Endothelial cell of umbilical vein (primary cell): ENCODE measurements at regions of chr4 and their contacts with region 1.

Region 1: GRCh38 chr4:53576676-53577372 is 14.5 kb downstream of the LNX1 start:
- DNase-seq: peak; percentile 90
- H3K4me3 ChIP-seq: no peak overlapping the region
- H3K27ac ChIP-seq: peak overlapping the region; percentile 40
- H3K4me1 ChIP-seq: peaks cover 36% of the 10 kb centered on the region
- H3K27me3 ChIP-seq: no peaks in the 10 kb centered on the region
- CTCF ChIP-seq: no peak
- POLR2A ChIP-seq: peak; percentile 35

Region 2: GRCh38 chr4:53541577-53542206 is 35.1 kb before region 1 on chr4:
- CTCF ChIA-PET with region 1: interaction called, 5 read pairs
- POLR2A ChIA-PET with region 1: no interaction called
- dilution Hi-C with region 1: no loop called
- intact Hi-C with region 1: loop called (anchors 2 kb)
- DNase-seq: peak; percentile 84
- H3K4me3 ChIP-seq: no peak overlapping the region
- H3K27ac ChIP-seq: peak overlapping the region; percentile 56
- H3K4me1 ChIP-seq: peaks cover 35% of the 10 kb centered on the region
- H3K27me3 ChIP-seq: no peaks in the 10 kb centered on the region
- CTCF ChIP-seq: no peak
- POLR2A ChIP-seq: no peak

Region 3: GRCh38 chr4:53592686-53593501 is 16.1 kb after region 1 on chr4:
- CTCF ChIA-PET with region 1: interaction called, 5 read pairs
- POLR2A ChIA-PET with region 1: no interaction called
- dilution Hi-C with region 1: no loop called
- intact Hi-C with region 1: loop called (anchors 1 kb)
- DNase-seq: peak; percentile 46
- H3K4me3 ChIP-seq: peak overlapping the region; percentile 26 to 73 (median 29)
- H3K27ac ChIP-seq: peak overlapping the region; percentile 44
- H3K4me1 ChIP-seq: peaks cover 9% of the 10 kb centered on the region
- H3K27me3 ChIP-seq: no peaks in the 10 kb centered on the region
- CTCF ChIP-seq: no peak
- POLR2A ChIP-seq: no peak